ENCODE measurements at regions of chr10 and their contacts with region 1.

Region 1: DNA sequence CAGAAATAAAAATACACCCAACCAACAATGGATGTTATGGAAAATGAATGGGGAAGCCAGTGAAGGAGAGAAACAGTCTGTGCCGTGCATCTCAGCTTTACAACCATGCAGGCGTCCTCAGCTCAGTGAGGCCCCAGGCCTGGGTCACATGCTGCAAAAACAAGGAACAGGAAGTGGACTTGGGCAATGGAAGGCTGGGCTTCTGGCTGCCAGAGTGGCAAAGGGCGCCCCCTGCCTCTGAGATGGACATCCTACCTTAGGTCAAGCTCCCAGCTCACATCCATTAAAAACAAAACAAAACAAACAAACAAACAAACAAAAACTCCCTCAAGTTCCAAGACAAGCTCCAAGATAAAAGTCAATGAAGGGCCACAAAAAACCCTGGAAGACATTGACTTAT is 54.7 kb upstream of the AFAP1L2 start:
- DNase-seq: peak in 1 of 2 donors; percentile 38
- ATAC-seq: peak in 6 of 8 donors; percentile 15 to 70 (median 58)
- H3K4me3 ChIP-seq: no peak overlapping the region
- H3K27ac ChIP-seq: no peak overlapping the region
- H3K4me1 ChIP-seq: peaks cover 0 to 6% (median 0%) of the 10 kb centered on the region in 9 donors
- H3K27me3 ChIP-seq: no peaks in the 10 kb centered on the region
- CTCF ChIP-seq: peak in 6 of 9 donors; percentile 29 to 55 (median 47)

Region 2: DNA sequence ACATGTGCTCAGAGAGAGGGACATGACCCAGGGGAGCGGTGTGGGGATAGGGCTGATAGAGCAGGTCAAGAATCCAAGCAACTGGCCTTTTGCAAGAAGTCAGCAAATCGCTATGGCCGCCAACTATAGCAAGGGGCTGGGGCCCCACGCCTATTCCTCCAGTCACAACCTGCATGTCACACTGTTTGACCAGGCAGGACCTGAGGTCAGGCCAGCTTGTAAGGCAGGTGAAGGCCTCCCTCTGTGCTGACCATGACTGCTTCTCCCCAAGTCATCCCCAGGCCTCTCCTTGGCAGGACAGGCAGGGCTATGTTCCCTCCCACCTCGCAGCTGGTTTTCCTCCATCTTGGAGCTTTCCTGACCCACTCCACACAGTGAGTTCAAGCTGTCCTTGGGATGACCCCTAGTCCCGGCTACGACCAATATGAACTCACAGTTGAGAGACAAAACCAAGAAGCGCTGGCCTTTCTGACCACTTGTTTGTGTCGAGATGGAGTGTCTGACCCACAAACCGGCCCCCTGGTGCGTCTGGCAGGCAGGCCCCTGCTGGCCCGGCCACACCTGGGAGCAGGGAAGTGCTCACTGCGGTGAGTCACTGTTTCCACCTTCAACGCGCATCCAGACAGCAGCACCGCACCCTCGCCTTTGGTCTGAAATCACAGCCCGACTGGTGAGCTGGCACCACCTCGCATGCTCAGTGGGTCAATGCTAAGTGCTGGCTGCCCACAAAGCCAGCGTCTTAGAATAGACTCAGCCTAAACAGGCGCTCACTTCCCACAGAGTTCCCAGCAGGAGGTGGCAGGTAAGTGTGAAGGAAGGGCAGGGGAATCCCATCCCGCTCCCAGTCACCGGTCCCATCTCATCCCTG is 138.5 kb before region 1 on chr10:
- intact Hi-C with region 1: no loop called
- DNase-seq: peak; percentile 35 to 43
- ATAC-seq: peak in 6 of 8 donors; percentile 20 to 80 (median 59)
- H3K4me3 ChIP-seq: no peak overlapping the region
- H3K27ac ChIP-seq: peak overlapping the region in 2 of 10 donors; percentile 34 to 51
- H3K4me1 ChIP-seq: peaks cover 0 to 30% (median 0%) of the 10 kb centered on the region in 9 donors
- H3K27me3 ChIP-seq: no peaks in the 10 kb centered on the region
- CTCF ChIP-seq: no peak

Region 3: DNA sequence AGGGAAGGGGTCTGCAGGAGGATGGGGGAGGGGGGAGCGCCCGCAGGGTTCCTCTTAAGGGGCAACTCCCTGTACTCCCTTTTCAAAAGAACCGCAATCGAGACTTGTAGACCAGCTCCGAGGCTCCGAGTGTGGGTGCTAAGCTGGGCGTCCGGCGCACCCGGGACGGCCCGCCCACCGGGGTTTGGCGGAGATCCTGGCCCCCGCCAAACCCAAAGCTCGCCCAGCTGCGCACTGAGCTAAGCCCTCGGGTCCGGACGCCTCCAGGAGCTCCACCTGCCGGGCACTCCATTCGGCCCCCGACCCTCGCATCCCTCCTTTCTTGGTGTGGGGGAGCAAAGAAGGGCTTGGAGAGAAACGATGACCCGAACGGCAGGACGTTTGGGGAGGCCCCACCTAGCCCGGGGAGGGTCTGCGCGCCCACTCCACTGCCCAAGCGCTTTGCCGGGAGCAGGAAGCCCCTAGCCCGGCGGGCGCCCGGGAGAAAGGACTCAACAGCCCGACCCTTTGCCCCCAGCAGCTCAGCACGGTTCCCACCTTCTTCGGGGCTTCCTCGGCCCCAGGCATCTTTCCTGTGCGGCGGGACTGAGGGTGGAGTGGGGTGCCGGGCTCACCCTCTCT is 55.3 kb before region 1 on chr10:
- intact Hi-C with region 1: no loop called
- DNase-seq: peak in 1 of 2 donors; percentile 51
- ATAC-seq: peak; percentile 50 to 81 (median 70)
- H3K4me3 ChIP-seq: peak overlapping the region; percentile 50 to 70 (median 62)
- H3K27ac ChIP-seq: peak overlapping the region in 9 of 10 donors; percentile 41 to 82 (median 63)
- H3K4me1 ChIP-seq: peaks cover 2 to 63% (median 44%) of the 10 kb centered on the region in 9 donors
- H3K27me3 ChIP-seq: peaks cover 0 to 61% (median 8%) of the 10 kb centered on the region in 7 donors
- CTCF ChIP-seq: peak in 7 of 9 donors; percentile 18 to 58 (median 33)

Region 4: DNA sequence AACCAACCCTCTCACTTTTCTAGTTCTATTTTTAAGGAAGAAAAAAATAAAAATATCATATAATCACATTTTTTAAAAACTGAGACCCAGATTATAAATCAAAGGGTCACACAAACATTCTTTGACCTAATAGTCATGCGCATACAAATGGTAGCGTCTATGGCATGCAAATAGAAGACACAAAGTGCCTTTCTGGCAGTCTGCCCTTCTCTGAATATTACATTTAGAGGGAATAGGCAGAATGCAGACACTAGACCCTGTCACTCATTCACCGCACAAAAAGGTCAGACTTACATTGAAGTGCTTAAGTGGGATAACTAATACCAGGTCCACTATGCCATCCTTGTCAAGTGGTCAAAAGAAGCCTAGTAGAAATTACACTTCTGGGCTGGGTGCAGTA is 336.1 kb after region 1 on chr10:
- intact Hi-C with region 1: loop called in 1 of 10 experiments (anchors 5 kb)
- DNase-seq: no peak
- ATAC-seq: no peak
- H3K4me3 ChIP-seq: no peak overlapping the region
- H3K27ac ChIP-seq: no peak overlapping the region
- H3K4me1 ChIP-seq: no peaks in the 10 kb centered on the region
- H3K27me3 ChIP-seq: no peaks in the 10 kb centered on the region
- CTCF ChIP-seq: no peak

Measured in heart right ventricle (tissue), 16 donors.